ENCODE measurements at regions of chr22 and their contacts with region 1.

Region 1: GRCh38 chr22:49046546-49047361 is 780.9 kb downstream of the BRD1 start:
- DNase-seq: no peak
- ATAC-seq: no peak

Region 2: GRCh38 chr22:49632199-49633009 is 585.6 kb after region 1 on chr22:
- intact Hi-C with region 1: loop called (anchors 5 kb)
- DNase-seq: no peak
- ATAC-seq: peak; percentile 71

Measured in Right ventricle myocardium inferior (tissue), 1 donor.